ENCODE measurements at regions of chr9 and their contacts with region 1.

Region 1: DNA sequence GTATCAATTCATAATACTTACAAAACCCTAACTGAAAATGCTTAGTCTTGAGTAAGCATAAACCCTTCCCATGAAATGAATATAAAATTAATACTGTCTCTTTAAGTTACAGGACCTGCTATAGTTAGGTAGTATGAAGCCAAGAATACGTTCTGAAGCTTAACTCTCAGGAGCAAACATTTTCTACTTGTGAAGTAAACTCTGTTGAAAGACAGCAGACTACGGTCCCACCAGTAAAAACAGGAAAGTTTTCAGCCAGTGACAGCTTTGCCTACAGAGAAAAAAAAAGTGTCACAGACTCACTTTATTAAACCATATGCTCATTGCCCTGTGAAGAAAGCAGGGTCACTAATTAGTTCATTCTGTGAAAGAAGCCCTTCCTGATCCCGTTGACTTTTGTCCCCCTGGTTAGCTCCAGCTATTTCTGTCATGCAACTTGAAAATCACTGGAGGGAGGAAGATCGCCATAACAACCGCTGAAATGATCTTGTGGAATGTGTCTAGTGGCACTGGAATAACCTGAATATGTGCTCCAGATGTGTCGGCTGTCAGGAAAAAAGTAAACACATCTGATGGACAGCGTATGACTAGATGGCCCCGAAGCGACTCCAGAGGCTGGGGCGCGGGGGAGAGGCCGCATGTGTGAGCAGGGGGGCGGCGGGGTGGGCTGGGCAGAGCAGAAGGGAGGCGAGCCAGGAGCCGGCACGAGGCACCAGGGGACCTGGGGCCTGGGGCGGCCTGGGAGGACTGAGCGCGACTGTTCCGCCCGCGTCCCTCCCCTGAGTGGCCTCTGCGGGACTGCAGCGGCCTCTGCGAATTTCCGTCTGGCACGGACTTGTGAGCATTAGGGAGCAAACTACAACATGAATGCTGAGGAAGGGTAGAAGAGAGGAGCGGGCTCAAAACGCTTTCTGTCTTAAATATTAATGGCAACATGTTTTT is 41.9 kb downstream of the BNC2 start:
- DNase-seq: no peak
- ATAC-seq: no peak
- H3K4me3 Mint-ChIP-seq: no peak overlapping the region
- H3K27ac Mint-ChIP-seq: no peak overlapping the region
- H3K4me1 Mint-ChIP-seq: no peaks in the 10 kb centered on the region
- H3K27me3 Mint-ChIP-seq: peaks cover 18% of the 10 kb centered on the region

Region 2: GRCh38 chr9:16809912-16810610 is 18.6 kb before region 1 on chr9:
- CTCF ChIA-PET with region 1: no interaction called
- POLR2A ChIA-PET with region 1: no interaction called
- intact Hi-C with region 1: no loop called
- DNase-seq: no peak
- ATAC-seq: no peak
- H3K4me3 Mint-ChIP-seq: no peak overlapping the region
- H3K27ac Mint-ChIP-seq: no peak overlapping the region
- H3K4me1 Mint-ChIP-seq: no peaks in the 10 kb centered on the region
- H3K27me3 Mint-ChIP-seq: no peaks in the 10 kb centered on the region

Region 3: DNA sequence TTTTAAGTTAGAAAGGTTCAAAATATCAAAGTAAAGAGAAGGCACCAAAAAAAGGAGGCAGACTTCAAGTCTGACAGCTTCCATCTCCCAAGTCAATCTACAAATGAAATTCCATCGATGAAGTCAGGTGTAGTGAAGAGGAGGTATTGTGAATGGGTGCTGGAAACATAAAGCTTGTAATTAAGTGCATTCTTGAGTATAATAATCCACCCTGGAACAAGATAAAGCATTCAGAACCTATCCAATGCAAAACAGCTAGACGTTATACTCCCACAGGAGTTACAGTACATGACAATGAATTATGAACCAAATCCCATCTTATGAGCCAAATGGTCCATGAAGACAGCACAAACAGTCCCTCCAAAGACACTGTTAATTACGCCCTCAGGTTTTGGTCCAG is 19.6 kb after region 1 on chr9:
- CTCF ChIA-PET with region 1: no interaction called
- POLR2A ChIA-PET with region 1: no interaction called
- intact Hi-C with region 1: no loop called
- DNase-seq: no peak
- ATAC-seq: no peak
- H3K4me3 Mint-ChIP-seq: no peak overlapping the region
- H3K27ac Mint-ChIP-seq: no peak overlapping the region
- H3K4me1 Mint-ChIP-seq: no peaks in the 10 kb centered on the region
- H3K27me3 Mint-ChIP-seq: no peaks in the 10 kb centered on the region

Region 4: GRCh38 chr9:16879416-16879815 is 50.8 kb after region 1 on chr9:
- CTCF ChIA-PET with region 1: no interaction called
- POLR2A ChIA-PET with region 1: no interaction called
- intact Hi-C with region 1: loop called in 1 of 2 experiments (anchors 5 kb)
- DNase-seq: no peak
- ATAC-seq: no peak
- H3K4me3 Mint-ChIP-seq: no peak overlapping the region
- H3K27ac Mint-ChIP-seq: no peak overlapping the region
- H3K4me1 Mint-ChIP-seq: no peaks in the 10 kb centered on the region
- H3K27me3 Mint-ChIP-seq: no peaks in the 10 kb centered on the region

Measured in activated CD4-positive, alpha-beta T cell treated with anti-CD3 and anti-CD28 coated beads for 36 hours (primary cell).